ENCODE measurements at regions of chr17 and their contacts with region 1.

Region 1: GRCh38 chr17:40399185-40399584 is 18.5 kb downstream of the TOP2A start:
- DNase-seq: no peak
- H3K4me3 Mint-ChIP-seq: no peak overlapping the region
- H3K27ac Mint-ChIP-seq: no peak overlapping the region
- H3K4me1 Mint-ChIP-seq: peaks cover 25% of the 10 kb centered on the region
- H3K27me3 Mint-ChIP-seq: no peaks in the 10 kb centered on the region

Region 2: GRCh38 chr17:40387680-40388079 is 11.5 kb before region 1 on chr17:
- CTCF ChIA-PET with region 1: interaction called, 10 read pairs
- POLR2A ChIA-PET with region 1: no interaction called
- DNase-seq: no peak
- H3K4me3 Mint-ChIP-seq: no peak overlapping the region
- H3K27ac Mint-ChIP-seq: no peak overlapping the region
- H3K4me1 Mint-ChIP-seq: no peaks in the 10 kb centered on the region
- H3K27me3 Mint-ChIP-seq: no peaks in the 10 kb centered on the region

Region 3: GRCh38 chr17:40410082-40410481 is 10.9 kb after region 1 on chr17:
- CTCF ChIA-PET with region 1: interaction called, 6 read pairs
- POLR2A ChIA-PET with region 1: interaction called, 11 read pairs
- DNase-seq: no peak
- H3K4me3 Mint-ChIP-seq: no peak overlapping the region
- H3K27ac Mint-ChIP-seq: peak overlapping the region; percentile 1
- H3K4me1 Mint-ChIP-seq: peaks cover 38% of the 10 kb centered on the region
- H3K27me3 Mint-ChIP-seq: no peaks in the 10 kb centered on the region

Region 4: GRCh38 chr17:40469805-40470675 is 70.9 kb after region 1 on chr17:
- CTCF ChIA-PET with region 1: no interaction called
- POLR2A ChIA-PET with region 1: no interaction called
- DNase-seq: no peak
- H3K4me3 Mint-ChIP-seq: no peak overlapping the region
- H3K27ac Mint-ChIP-seq: no peak overlapping the region
- H3K4me1 Mint-ChIP-seq: no peaks in the 10 kb centered on the region
- H3K27me3 Mint-ChIP-seq: peaks cover 23% of the 10 kb centered on the region